ENCODE measurements at regions of chr6 and their contacts with region 1.

Region 1: DNA sequence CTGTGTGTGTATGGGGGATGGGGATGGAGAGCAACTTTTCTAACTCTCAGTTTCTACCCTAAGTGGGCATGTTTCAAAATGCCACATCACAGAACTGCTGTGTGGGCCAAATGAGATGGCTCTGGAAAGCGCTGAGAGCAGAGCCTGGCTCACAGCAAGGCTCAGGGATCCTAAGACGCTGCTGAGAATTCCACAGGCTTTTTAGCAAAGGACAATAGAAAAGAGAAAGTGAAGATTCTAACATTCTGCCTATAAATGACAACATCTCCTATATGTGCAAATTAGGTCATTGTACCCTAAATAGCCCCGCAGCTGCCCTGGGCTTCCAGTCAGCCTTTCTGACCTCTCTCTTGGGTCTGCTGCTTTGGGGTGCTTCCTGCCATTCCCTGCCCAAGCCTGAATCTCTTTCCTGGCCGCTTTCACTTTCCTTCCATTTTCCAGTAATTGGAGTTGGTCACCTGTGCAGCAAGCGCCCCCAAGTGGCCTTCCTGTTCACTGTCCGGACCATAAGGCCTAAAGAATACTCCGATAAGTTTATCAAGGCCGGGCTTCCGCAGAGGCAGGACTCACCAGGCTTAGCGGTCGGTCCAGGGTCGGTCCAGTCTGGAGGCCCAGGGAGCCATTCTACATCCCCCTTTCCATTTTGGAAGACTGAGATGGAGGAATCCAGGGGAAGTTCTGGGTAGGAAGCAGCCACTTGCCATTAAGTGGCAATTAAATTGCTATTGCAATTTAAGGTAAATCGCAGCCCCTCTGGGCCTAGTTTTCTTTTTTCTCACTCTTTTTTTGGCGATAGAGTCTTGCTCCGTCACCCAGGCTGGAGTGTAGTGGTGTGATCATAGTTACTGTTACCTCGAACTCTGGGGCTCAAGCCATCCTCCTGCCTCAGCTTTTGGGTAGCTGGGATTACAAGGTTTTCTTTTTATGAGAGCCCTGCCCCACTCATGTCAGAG is 6.6 kb upstream of the DDR1 start:
- DNase-seq: peak; percentile 94
- ATAC-seq: peak; percentile 89
- H3K4me3 ChIP-seq: peak overlapping the region; percentile 59
- H3K27ac ChIP-seq: peak overlapping the region; percentile 63
- H3K4me1 ChIP-seq: peaks cover 32% of the 10 kb centered on the region
- H3K27me3 ChIP-seq: no peaks in the 10 kb centered on the region
- CTCF ChIP-seq: peak; percentile 96

Region 2: DNA sequence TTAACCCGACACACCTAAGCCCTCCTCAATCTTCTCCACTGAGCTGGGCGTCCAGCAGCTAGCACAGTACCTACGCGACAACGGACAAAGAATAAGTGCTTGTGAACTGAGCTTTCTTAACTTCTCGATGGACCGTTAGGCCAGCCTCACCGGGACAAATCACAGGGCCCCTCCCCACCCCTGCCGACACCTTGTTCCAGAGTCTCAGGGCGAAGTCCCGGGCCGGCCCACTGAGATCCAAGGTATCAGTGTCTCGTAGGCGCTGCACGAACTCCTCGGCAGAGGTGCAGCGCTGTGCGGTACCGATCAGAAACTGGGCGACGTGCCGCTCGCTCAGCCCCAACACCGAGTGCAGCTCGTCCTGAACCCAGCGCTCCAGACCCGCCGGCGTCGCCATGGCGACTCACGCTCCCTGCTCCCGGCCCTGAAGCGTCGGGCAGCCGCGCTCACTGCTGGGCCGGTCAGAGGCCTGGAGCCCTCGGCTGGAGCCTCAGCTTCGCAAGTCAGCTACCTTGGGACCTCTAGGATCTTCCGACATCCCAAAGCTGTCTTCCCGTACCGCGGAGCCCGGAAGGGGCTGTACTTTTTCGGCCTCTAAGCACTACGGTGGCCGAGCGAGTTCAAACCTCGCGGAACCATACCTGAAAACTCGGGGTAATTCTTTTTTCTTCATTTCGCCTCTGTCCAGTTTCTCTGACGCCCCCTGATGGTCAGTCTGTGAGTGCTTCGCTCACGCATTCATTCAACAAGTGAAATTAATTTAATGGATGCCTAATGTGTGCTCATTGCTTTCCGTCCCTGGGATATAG is 205.0 kb before region 1 on chr6 and contains the start of gene DHX16:
- CTCF ChIA-PET with region 1: no interaction called
- POLR2A ChIA-PET with region 1: no interaction called
- intact Hi-C with region 1: loop called (anchors 5 kb)
- DNase-seq: peak; percentile 99
- ATAC-seq: peak; percentile 82
- H3K4me3 ChIP-seq: peak within 1 kb of the TSS; percentile 75
- H3K27ac ChIP-seq: no peak within 1 kb of the TSS
- H3K4me1 ChIP-seq: peaks cover 4% of the 10 kb centered on the region
- H3K27me3 ChIP-seq: no peaks in the 10 kb centered on the region
- CTCF ChIP-seq: peak; percentile 95
- total RNA-seq, gene DHX16: 50.0 and 75.6 TPM in 2 replicates

Region 3: DNA sequence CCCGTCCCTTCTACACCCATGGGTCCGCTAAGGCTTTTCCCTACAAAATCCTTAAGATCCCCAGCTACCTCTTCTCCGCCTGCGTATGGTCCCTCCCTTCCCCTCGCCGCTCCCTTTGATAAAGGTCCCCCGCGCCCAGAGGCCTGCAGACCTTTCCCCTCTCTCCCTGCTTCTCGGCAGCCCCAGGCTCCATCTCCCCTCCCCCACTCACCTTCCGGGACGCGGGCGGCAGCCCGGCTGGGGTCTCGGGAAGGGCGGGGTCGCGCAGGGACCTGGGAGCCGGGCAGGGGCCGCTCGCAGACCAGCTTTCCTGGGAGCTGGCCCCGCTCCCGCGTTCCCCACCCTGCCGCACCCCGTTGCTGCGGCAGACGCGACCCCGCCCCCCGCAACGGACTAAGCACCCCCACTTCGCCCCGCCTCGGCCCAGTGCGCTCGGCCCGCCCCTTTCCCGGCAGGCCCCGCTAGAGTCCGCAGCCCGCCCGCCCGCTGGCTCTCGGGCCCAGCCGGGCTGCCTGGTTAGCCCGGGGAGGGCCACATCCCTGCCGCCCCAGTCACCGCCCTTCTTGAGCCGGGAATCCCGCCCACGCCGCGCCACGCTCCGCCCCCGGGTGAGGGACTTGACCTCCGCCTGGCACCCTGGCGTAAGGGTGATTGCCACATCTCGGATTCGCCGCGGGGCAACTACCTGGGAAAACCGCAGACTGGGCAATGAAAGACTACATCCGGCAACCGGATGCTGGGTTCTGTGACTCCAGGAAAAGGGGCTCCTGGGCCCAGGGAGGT is 135.2 kb before region 1 on chr6 and contains the start of gene FLOT1:
- CTCF ChIA-PET with region 1: no interaction called
- POLR2A ChIA-PET with region 1: no interaction called
- intact Hi-C with region 1: loop called (anchors 5 kb)
- DNase-seq: peak; percentile 98
- ATAC-seq: peak; percentile 74
- H3K4me3 ChIP-seq: peak within 1 kb of the TSS; percentile 91
- H3K27ac ChIP-seq: peak within 1 kb of the TSS; percentile 98
- H3K4me1 ChIP-seq: peaks cover 71% of the 10 kb centered on the region
- H3K27me3 ChIP-seq: no peaks in the 10 kb centered on the region
- CTCF ChIP-seq: no peak
- total RNA-seq, gene FLOT1: 305 and 401 TPM in 2 replicates

Region 4: DNA sequence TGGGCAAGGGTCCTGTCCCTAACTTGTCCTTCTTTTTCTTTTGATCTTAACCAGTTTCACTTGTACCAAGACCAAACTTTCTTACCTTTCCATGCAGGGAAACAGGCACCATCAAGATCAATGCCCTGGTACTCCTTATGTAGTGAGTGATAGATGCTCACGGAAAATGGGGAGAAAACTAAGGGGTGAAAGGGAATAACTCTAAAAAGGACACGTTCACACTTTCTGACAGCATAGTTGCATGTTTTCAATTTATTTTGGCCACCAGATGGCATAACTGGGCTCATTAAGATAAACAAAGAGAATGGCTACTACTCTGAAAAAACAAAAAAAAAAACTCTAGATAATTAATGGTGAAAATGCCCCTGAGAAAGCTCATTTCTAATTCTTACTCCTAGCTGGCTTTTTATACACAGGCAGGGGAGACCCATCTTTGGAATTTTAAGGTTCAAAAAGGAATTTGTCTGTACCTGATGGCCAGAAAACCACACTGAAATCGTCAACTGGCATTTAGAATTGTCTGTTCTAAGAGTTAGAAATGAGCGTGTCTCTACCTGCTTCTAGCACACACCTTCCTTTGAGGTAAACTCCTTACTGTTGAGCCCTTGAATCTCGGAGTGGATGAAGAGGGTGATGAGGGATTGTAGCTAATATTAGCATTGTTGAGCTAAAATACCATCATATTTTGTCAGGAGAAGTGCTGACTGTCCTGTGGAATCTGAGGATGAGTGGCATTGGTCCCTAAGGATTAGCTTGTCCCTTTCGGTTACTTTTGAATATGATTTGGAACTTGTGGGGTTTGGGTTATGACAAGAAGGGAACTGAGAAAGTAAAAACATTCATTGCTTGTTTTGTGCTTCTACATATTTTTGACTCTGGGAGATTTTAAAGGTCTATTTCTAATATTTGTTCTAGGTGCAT is 55.6 kb before region 1 on chr6:
- CTCF ChIA-PET with region 1: interaction called, 3 read pairs
- POLR2A ChIA-PET with region 1: no interaction called
- intact Hi-C with region 1: loop called (anchors 1 kb)
- DNase-seq: peak; percentile 70
- ATAC-seq: 0 out of 2 replicates have a peak, but pooled peaks have one; percentile 8
- H3K4me3 ChIP-seq: peak overlapping the region; percentile 13; the same call in 1 of the 2 replicates
- H3K27ac ChIP-seq: peak overlapping the region; percentile 74
- H3K4me1 ChIP-seq: peaks cover 63% of the 10 kb centered on the region
- H3K27me3 ChIP-seq: no peaks in the 10 kb centered on the region
- CTCF ChIP-seq: peak; percentile 77

Region 5: DNA sequence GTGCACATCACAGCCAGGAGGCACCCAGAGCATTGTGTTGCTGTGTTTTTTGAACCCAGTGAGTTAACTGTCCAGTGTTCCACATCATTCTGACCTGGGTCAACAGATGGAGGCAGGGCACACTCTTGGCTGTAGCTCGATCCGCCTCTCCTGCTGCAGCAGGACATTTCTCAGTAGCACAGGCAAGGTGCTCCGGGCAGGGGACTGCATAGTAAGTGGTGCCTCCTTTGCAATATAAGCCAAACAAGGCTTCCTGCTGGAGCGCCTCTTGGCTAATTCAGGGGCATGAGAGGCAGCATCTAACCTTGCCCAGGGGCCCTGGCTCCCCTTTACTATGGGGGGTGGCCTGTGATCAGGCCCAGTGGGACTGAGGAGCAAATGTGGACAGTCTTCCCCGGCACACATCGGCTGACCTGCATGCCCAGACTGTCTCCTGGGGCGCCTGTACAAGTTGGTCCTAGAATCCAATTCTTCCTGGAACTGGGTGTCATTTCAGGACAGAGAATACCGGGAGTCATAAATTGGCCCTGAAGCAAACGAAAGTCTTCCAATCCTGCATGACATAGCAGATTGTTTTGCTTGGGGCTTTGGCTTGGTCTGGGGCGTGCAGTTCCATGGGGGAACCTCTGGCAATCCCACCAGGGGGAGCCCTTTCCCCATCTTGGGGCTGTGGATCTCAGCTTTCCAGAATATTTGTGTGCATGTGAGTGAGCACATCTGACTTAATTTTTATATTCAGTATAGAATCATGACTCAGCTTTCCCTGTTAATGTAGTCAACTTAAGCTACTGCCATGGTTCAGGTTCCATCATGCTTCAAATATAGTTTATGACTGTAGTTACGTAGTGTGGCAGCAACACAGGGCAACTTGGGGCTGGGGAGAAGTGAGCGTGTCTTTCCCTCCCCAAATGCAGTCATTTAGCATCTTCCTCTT is 49.4 kb before region 1 on chr6:
- CTCF ChIA-PET with region 1: interaction called, 6 read pairs
- POLR2A ChIA-PET with region 1: no interaction called
- intact Hi-C with region 1: loop called (anchors 1 kb)
- DNase-seq: peak; percentile 94
- ATAC-seq: peak; percentile 91
- H3K4me3 ChIP-seq: no peak overlapping the region
- H3K27ac ChIP-seq: peak overlapping the region; percentile 80
- H3K4me1 ChIP-seq: peaks cover 36% of the 10 kb centered on the region
- H3K27me3 ChIP-seq: no peaks in the 10 kb centered on the region
- CTCF ChIP-seq: peak; percentile 95

Region 6: DNA sequence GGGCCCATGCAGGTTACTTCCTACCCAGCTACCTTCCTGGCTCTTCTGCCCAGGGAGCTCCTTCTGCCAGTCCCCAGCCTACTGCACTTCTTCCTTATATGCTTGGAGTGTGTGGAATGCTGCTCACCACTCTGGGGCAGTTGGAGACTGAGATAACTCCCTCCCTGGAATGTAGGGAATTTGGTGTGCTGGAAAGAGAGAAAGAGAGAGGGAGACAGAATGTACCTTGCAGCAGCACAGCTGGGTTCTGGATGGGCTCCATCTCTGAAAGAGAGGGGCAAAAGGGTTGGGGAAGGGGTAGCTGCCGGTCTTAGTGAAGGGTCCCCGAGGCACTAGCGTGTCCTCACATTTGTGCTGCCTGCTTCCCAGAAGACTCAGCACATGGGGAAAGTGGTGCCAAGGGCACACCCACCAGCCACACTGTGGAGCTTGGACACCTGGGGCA is 33.6 kb before region 1 on chr6:
- CTCF ChIA-PET with region 1: no interaction called
- POLR2A ChIA-PET with region 1: no interaction called
- intact Hi-C with region 1: no loop called
- DNase-seq: no peak
- ATAC-seq: no peak
- H3K4me3 ChIP-seq: no peak overlapping the region
- H3K27ac ChIP-seq: no peak overlapping the region
- H3K4me1 ChIP-seq: no peaks in the 10 kb centered on the region
- H3K27me3 ChIP-seq: no peaks in the 10 kb centered on the region
- CTCF ChIP-seq: no peak